Activated naive CD4-positive, alpha-beta T cell treated with anti-CD3 and anti-CD28 coated beads for 36 hours (primary cell): ENCODE measurements at regions of chr7 and their contacts with region 1.

Region 1: DNA sequence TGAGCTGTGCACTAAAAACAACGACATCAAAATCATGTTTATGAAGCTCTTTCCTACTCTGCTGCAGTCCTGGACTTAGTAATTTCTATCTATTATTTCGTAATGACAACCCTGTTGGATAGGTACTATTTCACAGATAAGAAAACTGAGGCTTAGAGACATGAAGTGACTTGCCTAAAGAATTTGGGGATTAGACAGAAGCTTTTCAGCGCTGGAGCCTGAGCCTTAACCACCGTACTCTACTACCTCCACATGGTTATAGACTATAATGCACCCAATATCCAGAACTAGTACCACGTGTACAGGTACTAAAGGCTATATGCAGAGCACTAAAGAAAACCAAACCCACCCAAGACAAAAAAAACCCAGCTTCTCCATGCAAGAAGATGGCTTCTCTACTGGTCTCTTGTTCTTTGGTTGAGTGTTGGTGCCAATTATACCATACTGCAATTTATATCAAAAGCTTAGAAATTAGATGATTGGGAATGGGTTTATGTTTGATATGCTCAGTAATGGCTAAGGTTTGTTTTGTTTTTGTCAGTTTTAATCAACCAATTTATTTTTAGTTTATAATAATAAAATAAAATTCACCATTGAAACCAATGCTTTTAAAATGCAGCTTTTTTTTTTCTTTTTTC is 6.5 kb upstream of the SNX10 start:
- DNase-seq: peak; percentile 38
- H3K4me3 Mint-ChIP-seq: no peak overlapping the region
- H3K27ac Mint-ChIP-seq: no peak overlapping the region
- H3K4me1 Mint-ChIP-seq: peaks cover 2% of the 10 kb centered on the region
- H3K27me3 Mint-ChIP-seq: no peaks in the 10 kb centered on the region

Region 2: DNA sequence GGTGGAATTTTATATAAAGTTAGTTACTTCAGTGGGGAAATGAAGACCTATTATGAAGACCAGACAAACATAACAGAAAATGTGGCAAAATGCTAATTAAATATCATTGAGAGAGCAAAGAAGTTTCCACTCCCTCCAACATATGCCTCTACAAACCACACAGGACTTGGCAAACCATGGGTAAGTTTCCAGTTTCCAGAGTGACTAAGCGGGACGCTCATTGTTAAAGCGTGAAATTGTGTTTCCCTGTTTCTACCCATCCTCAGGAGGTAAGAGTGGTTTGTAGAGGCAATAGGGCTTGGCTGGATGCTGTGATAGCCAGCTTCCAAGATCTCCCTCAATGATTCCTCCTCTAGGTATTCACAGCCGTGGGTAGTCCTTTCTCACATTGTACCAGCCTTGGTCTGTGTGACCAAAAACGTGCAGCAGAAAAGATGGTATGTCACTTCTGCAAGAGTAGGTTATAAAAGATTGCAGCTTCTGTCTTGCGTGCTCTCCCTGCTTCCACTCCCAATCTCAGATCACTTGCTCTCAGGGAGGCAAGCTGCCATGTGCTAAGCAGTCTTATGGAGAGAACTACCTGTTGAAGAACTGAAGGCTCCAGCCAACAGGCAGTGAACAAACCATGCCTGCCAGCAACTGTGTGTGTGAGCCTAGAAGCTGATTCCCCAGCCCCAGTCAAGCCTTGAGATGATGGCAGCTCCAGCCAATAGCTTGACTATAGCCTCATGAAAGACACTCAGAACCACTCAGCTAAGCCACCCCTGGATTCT is 47.9 kb before region 1 on chr7:
- CTCF ChIA-PET with region 1: interaction called, 5 read pairs
- intact Hi-C with region 1: loop called (anchors 5 kb)
- DNase-seq: no peak
- H3K4me3 Mint-ChIP-seq: no peak overlapping the region
- H3K27ac Mint-ChIP-seq: no peak overlapping the region
- H3K4me1 Mint-ChIP-seq: no peaks in the 10 kb centered on the region
- H3K27me3 Mint-ChIP-seq: no peaks in the 10 kb centered on the region